ENCODE measurements at regions of chr10 and their contacts with region 1.

Region 1: GRCh38 chr10:97731346-97732051 is 5.4 kb upstream of the ZFYVE27 start:
- DNase-seq: peak; percentile 27 to 82 (median 48)
- ATAC-seq: peak; percentile 75
- H3K4me3 ChIP-seq: no peak overlapping the region
- H3K4me3 Mint-ChIP-seq: no peak overlapping the region
- H3K27ac ChIP-seq: no peak overlapping the region
- H3K27ac Mint-ChIP-seq: no peak overlapping the region
- H3K4me1 ChIP-seq: peaks cover 8% of the 10 kb centered on the region
- H3K4me1 Mint-ChIP-seq: peaks cover 12% of the 10 kb centered on the region
- H3K27me3 ChIP-seq: no peaks in the 10 kb centered on the region
- H3K27me3 Mint-ChIP-seq: peaks cover 8% of the 10 kb centered on the region
- CTCF ChIP-seq: peak; percentile 83

Region 2: GRCh38 chr10:97572214-97572989 is 159.1 kb before region 1 on chr10 and contains the start of gene ANKRD2:
- CTCF ChIA-PET with region 1: no interaction called
- POLR2A ChIA-PET with region 1: no interaction called
- intact Hi-C with region 1: loop called in 1 of 2 experiments (anchors 1 kb)
- DNase-seq: peak; percentile 13 to 68 (median 36)
- ATAC-seq: peak; percentile 57
- H3K4me3 ChIP-seq: no peak within 1 kb of the TSS
- H3K4me3 Mint-ChIP-seq: no peak within 1 kb of the TSS
- H3K27ac ChIP-seq: no peak within 1 kb of the TSS
- H3K27ac Mint-ChIP-seq: no peak within 1 kb of the TSS
- H3K4me1 ChIP-seq: no peaks in the 10 kb centered on the region
- H3K4me1 Mint-ChIP-seq: no peaks in the 10 kb centered on the region
- H3K27me3 ChIP-seq: no peaks in the 10 kb centered on the region
- H3K27me3 Mint-ChIP-seq: no peaks in the 10 kb centered on the region
- CTCF ChIP-seq: peak; percentile 56
- total RNA-seq, gene ANKRD2: not detected

Region 3: GRCh38 chr10:97789770-97790397 is 58.4 kb after region 1 on chr10:
- CTCF ChIA-PET with region 1: no interaction called
- POLR2A ChIA-PET with region 1: no interaction called
- intact Hi-C with region 1: no loop called
- DNase-seq: no peak
- ATAC-seq: no peak
- H3K4me3 ChIP-seq: no peak overlapping the region
- H3K4me3 Mint-ChIP-seq: no peak overlapping the region
- H3K27ac ChIP-seq: no peak overlapping the region
- H3K27ac Mint-ChIP-seq: no peak overlapping the region
- H3K4me1 ChIP-seq: peaks cover 11% of the 10 kb centered on the region
- H3K4me1 Mint-ChIP-seq: peaks cover 6% of the 10 kb centered on the region
- H3K27me3 ChIP-seq: no peaks in the 10 kb centered on the region
- H3K27me3 Mint-ChIP-seq: peaks cover 5% of the 10 kb centered on the region
- CTCF ChIP-seq: no peak